Activated CD8-positive, alpha-beta T cell treated with anti-CD3 and anti-CD28 coated beads for 36 hours (primary cell): ENCODE measurements at regions of chr1 and their contacts with region 1.

Region 1: DNA sequence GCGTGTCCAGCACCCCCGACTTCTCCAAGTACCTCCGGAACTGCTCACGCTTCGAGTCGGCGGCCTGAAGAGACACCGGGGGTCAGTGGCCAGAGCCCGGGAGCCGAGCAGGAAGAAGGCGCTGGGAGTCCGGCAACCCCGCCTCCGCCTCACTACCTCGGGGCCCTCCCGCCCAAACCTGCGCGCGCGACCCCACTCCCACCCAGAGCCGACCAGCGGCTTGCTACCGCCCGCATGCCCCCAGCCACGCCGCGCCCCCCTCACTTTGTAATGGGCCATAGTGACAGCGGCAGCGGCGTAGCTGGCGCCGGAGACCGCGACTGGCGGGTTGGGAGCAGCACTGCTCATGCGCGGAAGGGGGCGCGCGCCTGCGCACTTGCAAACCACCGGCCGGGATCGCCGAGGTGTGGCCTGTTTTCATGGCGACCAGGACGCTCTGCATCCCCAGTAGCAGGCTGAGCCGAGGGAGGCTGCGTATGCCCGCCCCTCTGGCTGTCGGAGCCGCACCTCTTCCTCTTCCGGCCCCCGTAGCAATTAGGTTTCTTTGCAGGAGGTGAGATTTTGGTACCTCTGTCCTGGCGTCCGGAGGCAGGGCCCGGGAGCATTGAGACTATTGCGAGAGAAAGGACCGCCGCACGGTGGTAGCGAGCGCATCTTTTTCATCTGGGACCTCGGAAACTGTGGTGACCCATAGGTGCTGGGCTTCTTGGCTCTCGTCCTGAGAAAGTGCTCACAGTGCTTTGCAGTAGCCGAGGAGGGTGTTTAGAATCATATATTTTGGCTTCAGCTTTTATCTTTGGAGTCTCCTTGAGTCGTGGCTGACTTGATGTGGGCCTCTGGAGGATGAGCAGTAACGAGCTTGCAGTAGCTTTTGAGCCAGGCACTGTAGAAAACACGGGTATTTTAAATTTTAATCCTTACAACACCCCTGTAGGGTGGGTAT is at the start of gene MYCBP:
- DNase-seq: peak; percentile 97
- ATAC-seq: peak; percentile 99
- H3K4me3 Mint-ChIP-seq: peak within 1 kb of the TSS; percentile 95
- H3K27ac Mint-ChIP-seq: peak within 1 kb of the TSS; percentile 85
- H3K4me1 Mint-ChIP-seq: peaks cover 21% of the 10 kb centered on the region
- H3K27me3 Mint-ChIP-seq: no peaks in the 10 kb centered on the region
- CTCF ChIP-seq: no peak
- total RNA-seq, gene MYCBP: 45.6 to 46.4 TPM

Region 2: DNA sequence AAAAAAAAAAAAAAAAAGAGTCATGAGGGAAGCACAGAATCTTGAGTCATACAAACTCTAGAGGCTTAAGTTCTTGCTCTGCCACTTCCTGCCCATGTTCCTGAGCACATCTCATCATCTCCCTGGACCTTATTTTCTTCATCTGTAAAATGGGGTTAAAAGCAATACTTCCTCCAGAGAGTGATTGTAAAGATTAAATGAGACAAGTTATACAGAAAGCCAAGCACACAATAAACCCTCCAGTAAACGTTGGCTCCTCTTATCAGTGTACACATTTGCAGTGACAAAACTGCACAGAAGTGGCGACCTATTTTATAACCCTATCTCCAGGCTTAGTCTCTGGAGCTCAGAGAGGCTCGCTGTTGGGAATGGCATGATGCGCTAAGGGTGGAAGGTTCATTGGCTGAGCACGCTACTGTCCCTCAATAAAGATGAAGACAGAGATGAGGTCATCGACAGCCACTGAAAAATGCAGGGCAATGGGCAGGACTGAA is 95.8 kb before region 1 on chr1:
- CTCF ChIA-PET with region 1: no interaction called
- POLR2A ChIA-PET with region 1: no interaction called
- intact Hi-C with region 1: no loop called
- DNase-seq: no peak
- ATAC-seq: no peak
- H3K4me3 Mint-ChIP-seq: no peak overlapping the region
- H3K27ac Mint-ChIP-seq: no peak overlapping the region
- H3K4me1 Mint-ChIP-seq: no peaks in the 10 kb centered on the region
- H3K27me3 Mint-ChIP-seq: peaks cover 21% of the 10 kb centered on the region
- CTCF ChIP-seq: no peak

Region 3: GRCh38 chr1:38859561-38860453 is 13.5 kb before region 1 on chr1 and contains the start of gene RRAGC:
- CTCF ChIA-PET with region 1: interaction called, 3 read pairs
- POLR2A ChIA-PET with region 1: interaction called, 5 read pairs
- intact Hi-C with region 1: loop called (anchors 2 kb)
- DNase-seq: peak; percentile 99
- ATAC-seq: peak; percentile 98
- H3K4me3 Mint-ChIP-seq: peak within 1 kb of the TSS; percentile 86
- H3K27ac Mint-ChIP-seq: peak within 1 kb of the TSS; percentile 81
- H3K4me1 Mint-ChIP-seq: peaks cover 38% of the 10 kb centered on the region
- H3K27me3 Mint-ChIP-seq: no peaks in the 10 kb centered on the region
- CTCF ChIP-seq: no peak
- total RNA-seq, gene RRAGC: 8.2 to 9.1 TPM

Region 4: GRCh38 chr1:38889589-38889988 is 16.3 kb after region 1 on chr1:
- CTCF ChIA-PET with region 1: no interaction called
- POLR2A ChIA-PET with region 1: no interaction called
- intact Hi-C with region 1: no loop called
- DNase-seq: no peak
- ATAC-seq: no peak
- H3K4me3 Mint-ChIP-seq: no peak overlapping the region
- H3K27ac Mint-ChIP-seq: no peak overlapping the region
- H3K4me1 Mint-ChIP-seq: no peaks in the 10 kb centered on the region
- H3K27me3 Mint-ChIP-seq: no peaks in the 10 kb centered on the region
- CTCF ChIP-seq: no peak

Region 5: GRCh38 chr1:38929476-38929875 is 56.2 kb after region 1 on chr1:
- CTCF ChIA-PET with region 1: no interaction called
- POLR2A ChIA-PET with region 1: no interaction called
- intact Hi-C with region 1: no loop called
- DNase-seq: no peak
- ATAC-seq: no peak
- H3K4me3 Mint-ChIP-seq: no peak overlapping the region
- H3K27ac Mint-ChIP-seq: no peak overlapping the region
- H3K4me1 Mint-ChIP-seq: no peaks in the 10 kb centered on the region
- H3K27me3 Mint-ChIP-seq: no peaks in the 10 kb centered on the region
- CTCF ChIP-seq: no peak

Region 6: GRCh38 chr1:38973659-38974424 is 100.5 kb after region 1 on chr1:
- CTCF ChIA-PET with region 1: no interaction called
- POLR2A ChIA-PET with region 1: no interaction called
- intact Hi-C with region 1: no loop called
- DNase-seq: no peak
- ATAC-seq: no peak
- H3K4me3 Mint-ChIP-seq: no peak overlapping the region
- H3K27ac Mint-ChIP-seq: no peak overlapping the region
- H3K4me1 Mint-ChIP-seq: peaks cover 11% of the 10 kb centered on the region
- H3K27me3 Mint-ChIP-seq: no peaks in the 10 kb centered on the region
- CTCF ChIP-seq: no peak